B cell (primary cell): ENCODE measurements at regions of chr4 and their contacts with region 1.

Region 1: GRCh38 chr4:87390891-87391575 is at the start of gene HSD17B11:
- DNase-seq: peak; percentile 91
- ATAC-seq: peak; percentile 100
- H3K4me3 ChIP-seq: peak within 1 kb of the TSS; percentile 69 to 94 (median 92)
- H3K4me3 Mint-ChIP-seq: peak within 1 kb of the TSS; percentile 97
- H3K27ac ChIP-seq: peak within 1 kb of the TSS; percentile 69 to 82
- H3K27ac Mint-ChIP-seq: peak within 1 kb of the TSS; percentile 93
- H3K4me1 ChIP-seq: peaks cover 24 to 30% of the 10 kb centered on the region in 2 donors
- H3K4me1 Mint-ChIP-seq: peaks cover 47% of the 10 kb centered on the region
- H3K27me3 ChIP-seq: no peaks in the 10 kb centered on the region
- H3K27me3 Mint-ChIP-seq: no peaks in the 10 kb centered on the region
- CTCF ChIP-seq: no peak
- total RNA-seq, gene HSD17B11: 62.2 and 71.0 TPM in 2 replicates

Region 2: GRCh38 chr4:87220094-87220822 is 170.8 kb before region 1 on chr4 and contains the start of gene KLHL8:
- CTCF ChIA-PET with region 1: interaction called, 3 read pairs
- POLR2A ChIA-PET with region 1: no interaction called
- intact Hi-C with region 1: loop called (anchors 5 kb)
- DNase-seq: peak; percentile 92
- ATAC-seq: peak; percentile 93
- H3K4me3 ChIP-seq: peak within 1 kb of the TSS; percentile 76 to 100 (median 93)
- H3K4me3 Mint-ChIP-seq: peak within 1 kb of the TSS; percentile 98
- H3K27ac ChIP-seq: peak within 1 kb of the TSS; percentile 80 to 85
- H3K27ac Mint-ChIP-seq: peak within 1 kb of the TSS; percentile 96
- H3K4me1 ChIP-seq: peaks cover 7% of the 10 kb centered on the region in 2 donors
- H3K4me1 Mint-ChIP-seq: peaks cover 16% of the 10 kb centered on the region
- H3K27me3 ChIP-seq: no peaks in the 10 kb centered on the region
- H3K27me3 Mint-ChIP-seq: no peaks in the 10 kb centered on the region
- CTCF ChIP-seq: no peak
- total RNA-seq, gene KLHL8: 12.4 and 14.3 TPM in 2 replicates

Region 3: GRCh38 chr4:87375719-87376291 is 15.2 kb before region 1 on chr4:
- CTCF ChIA-PET with region 1: interaction called, 19 read pairs
- POLR2A ChIA-PET with region 1: interaction called, 5 read pairs
- intact Hi-C with region 1: no loop called
- DNase-seq: peak; percentile 60
- ATAC-seq: peak; percentile 51
- H3K4me3 ChIP-seq: no peak overlapping the region
- H3K4me3 Mint-ChIP-seq: no peak overlapping the region
- H3K27ac ChIP-seq: no peak overlapping the region
- H3K27ac Mint-ChIP-seq: no peak overlapping the region
- H3K4me1 ChIP-seq: no peaks in the 10 kb centered on the region
- H3K4me1 Mint-ChIP-seq: peaks cover 6% of the 10 kb centered on the region
- H3K27me3 ChIP-seq: no peaks in the 10 kb centered on the region
- H3K27me3 Mint-ChIP-seq: no peaks in the 10 kb centered on the region
- CTCF ChIP-seq: peak; percentile 82

Region 4: GRCh38 chr4:87422104-87423052 is 31.3 kb after region 1 on chr4 and contains the start of gene NUDT9:
- CTCF ChIA-PET with region 1: interaction called, 28 read pairs
- POLR2A ChIA-PET with region 1: interaction called, 25 read pairs
- intact Hi-C with region 1: loop called (anchors 1 kb)
- DNase-seq: peak; percentile 93
- ATAC-seq: peak; percentile 85
- H3K4me3 ChIP-seq: peak within 1 kb of the TSS; percentile 86 to 97 (median 89)
- H3K4me3 Mint-ChIP-seq: peak within 1 kb of the TSS; percentile 100
- H3K27ac ChIP-seq: peak within 1 kb of the TSS; percentile 80 to 92
- H3K27ac Mint-ChIP-seq: peak within 1 kb of the TSS; percentile 100
- H3K4me1 ChIP-seq: peaks cover 16 to 26% of the 10 kb centered on the region in 2 donors
- H3K4me1 Mint-ChIP-seq: peaks cover 40% of the 10 kb centered on the region
- H3K27me3 ChIP-seq: no peaks in the 10 kb centered on the region
- H3K27me3 Mint-ChIP-seq: no peaks in the 10 kb centered on the region
- CTCF ChIP-seq: no peak
- total RNA-seq, gene NUDT9: 17.5 and 21.5 TPM in 2 replicates

Region 5: DNA sequence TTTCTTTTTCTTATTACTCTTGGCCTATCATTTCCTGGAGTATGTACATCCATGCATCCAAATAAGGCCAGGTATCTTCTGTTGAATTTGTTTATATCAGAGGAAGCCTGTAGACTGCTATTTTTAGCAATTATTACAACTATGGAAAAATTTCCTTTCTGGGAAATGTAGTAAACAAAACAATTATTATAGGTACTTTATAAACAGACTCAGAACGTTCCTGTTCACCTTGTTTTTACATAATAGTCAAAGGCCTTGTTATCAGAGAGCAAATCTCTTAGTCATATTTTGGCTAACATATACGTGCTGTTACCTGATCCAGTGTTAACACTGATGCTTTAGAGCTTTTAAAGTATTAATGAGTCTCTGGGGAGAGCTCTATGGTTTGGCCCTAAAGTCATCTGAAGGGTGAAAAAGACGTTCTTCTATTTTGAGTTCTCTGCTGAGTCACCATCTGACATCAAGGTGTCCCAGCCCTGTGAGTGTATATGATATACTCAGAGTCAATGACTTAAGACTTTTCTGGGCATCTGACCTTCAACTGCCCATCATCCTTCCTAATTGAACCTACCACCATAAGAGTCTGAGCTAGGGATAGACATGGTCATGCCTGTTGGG is 130.8 kb after region 1 on chr4:
- CTCF ChIA-PET with region 1: no interaction called
- POLR2A ChIA-PET with region 1: no interaction called
- intact Hi-C with region 1: no loop called
- DNase-seq: no peak
- ATAC-seq: no peak
- H3K4me3 ChIP-seq: no peak overlapping the region
- H3K4me3 Mint-ChIP-seq: no peak overlapping the region
- H3K27ac ChIP-seq: no peak overlapping the region
- H3K27ac Mint-ChIP-seq: no peak overlapping the region
- H3K4me1 ChIP-seq: no peaks in the 10 kb centered on the region
- H3K4me1 Mint-ChIP-seq: peaks cover 6% of the 10 kb centered on the region
- H3K27me3 ChIP-seq: no peaks in the 10 kb centered on the region
- H3K27me3 Mint-ChIP-seq: no peaks in the 10 kb centered on the region
- CTCF ChIP-seq: no peak

Region 6: GRCh38 chr4:89110986-89111832 is 1720.2 kb after region 1 on chr4 and contains the start of gene TIGD2:
- CTCF ChIA-PET with region 1: no interaction called
- POLR2A ChIA-PET with region 1: no interaction called
- intact Hi-C with region 1: loop called (anchors 5 kb)
- DNase-seq: peak; percentile 94
- ATAC-seq: peak; percentile 92
- H3K4me3 ChIP-seq: peak within 1 kb of the TSS; percentile 70 to 88 (median 82)
- H3K4me3 Mint-ChIP-seq: peak within 1 kb of the TSS; percentile 88
- H3K27ac ChIP-seq: peak within 1 kb of the TSS; percentile 30 to 85
- H3K27ac Mint-ChIP-seq: peak within 1 kb of the TSS; percentile 85
- H3K4me1 ChIP-seq: peaks cover 14 to 18% of the 10 kb centered on the region in 2 donors
- H3K4me1 Mint-ChIP-seq: peaks cover 27% of the 10 kb centered on the region
- H3K27me3 ChIP-seq: peaks cover 0 to 4% (median 1%) of the 10 kb centered on the region in 4 experiments
- H3K27me3 Mint-ChIP-seq: peaks cover 2% of the 10 kb centered on the region
- CTCF ChIP-seq: peak; percentile 94
- total RNA-seq, gene TIGD2: 8.6 and 9.5 TPM in 2 replicates